Activated T-helper 2 cell treated with anti-CD3 and anti-CD28 coated beads, Interferon-gamma antibody, Interleukin-2, Interleukin-4, amounts not matched to agents 10 μg/mL and 5 μg/mL and 100 μg/mL, durations not matched to agents 14 hours and 24 hours and 36 hours (primary cell): ENCODE measurements at regions of chr9 and their contacts with region 1.

Region 1: DNA sequence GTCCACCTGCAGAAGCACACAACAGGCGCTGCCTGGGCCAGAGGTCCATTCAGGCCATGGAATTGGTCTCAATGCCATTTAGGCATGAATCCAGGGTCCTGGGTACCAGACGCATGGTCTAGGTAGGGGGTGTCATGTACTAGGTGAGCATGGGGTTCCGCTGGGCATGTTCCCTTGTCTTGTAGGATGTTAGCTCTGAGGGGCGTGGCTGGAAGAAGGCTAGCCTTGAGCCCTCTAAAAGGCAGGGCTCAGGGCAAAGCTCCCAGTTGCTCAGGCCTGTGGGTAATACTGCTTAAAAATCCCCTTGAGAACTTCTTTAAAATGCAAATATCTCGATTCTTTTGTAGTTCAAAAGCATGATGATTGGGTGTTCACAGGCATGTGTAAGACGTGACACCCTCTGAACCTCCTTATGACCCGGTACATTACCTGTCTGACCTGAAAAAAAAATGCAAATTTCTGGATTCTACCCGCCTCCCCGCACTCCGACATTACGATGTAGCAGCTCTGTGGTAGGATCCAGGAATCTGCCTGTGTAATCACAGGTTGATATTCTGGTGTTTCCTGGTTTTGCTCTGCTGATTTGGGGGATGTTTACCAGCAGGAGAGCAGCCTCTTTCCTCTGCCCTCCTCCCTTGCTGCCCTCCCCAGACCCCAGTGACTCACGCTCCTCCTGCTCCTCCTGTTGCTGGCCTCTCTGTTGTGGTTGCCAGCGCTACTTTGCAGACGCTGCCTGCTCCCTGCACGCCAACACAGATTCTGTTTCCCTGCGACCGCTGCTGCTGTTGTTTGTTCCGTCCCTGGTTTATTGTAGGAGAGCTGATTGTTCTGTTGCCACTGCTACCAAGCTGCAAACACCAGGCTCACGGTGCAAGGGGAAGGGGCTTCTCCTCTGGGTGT is 5.7 kb downstream of the TMC1 start:
- DNase-seq: peak; percentile 61
- H3K4me3 Mint-ChIP-seq: peak overlapping the region; percentile 72
- H3K27ac Mint-ChIP-seq: peak overlapping the region; percentile 94
- H3K4me1 Mint-ChIP-seq: peaks cover 43% of the 10 kb centered on the region
- H3K27me3 Mint-ChIP-seq: no peaks in the 10 kb centered on the region

Region 2: DNA sequence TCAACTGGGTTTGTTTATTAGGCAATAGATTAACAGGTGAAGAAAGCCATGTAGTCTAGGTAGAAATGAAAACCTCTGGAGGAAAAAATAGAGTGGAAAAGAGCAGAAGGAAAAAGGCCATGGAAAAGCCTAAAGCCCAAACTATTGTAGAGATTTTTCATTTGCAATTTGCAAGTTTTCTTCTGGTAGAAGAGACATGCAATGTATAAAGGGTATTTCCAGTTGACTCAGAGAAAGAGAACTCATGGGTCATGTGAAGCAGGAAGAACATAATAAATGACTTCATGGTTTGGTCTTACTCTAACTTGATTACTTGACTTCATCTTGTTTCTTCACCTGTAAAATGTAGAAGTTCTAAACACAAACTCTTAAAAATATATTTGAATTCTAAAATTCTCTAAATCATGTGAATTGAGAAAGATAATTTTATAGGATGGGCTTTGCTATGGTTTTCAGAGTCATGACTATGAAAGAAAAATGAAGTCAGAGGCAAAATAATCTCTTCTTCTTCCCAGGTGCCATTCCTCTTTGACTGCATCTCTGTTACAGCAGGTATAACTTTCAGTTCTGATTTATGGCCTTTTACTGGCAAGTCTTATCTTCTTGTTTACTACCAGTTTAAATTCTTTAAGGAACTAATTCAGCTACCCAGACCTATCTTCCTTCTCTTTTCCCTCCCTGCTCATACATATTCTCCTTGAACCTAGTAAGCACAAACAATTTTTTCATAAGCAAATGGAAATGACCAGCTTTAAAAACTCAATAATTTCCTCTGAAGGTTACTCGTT is 53.5 kb before region 1 on chr9:
- intact Hi-C with region 1: loop called (anchors 1 kb)
- DNase-seq: no peak
- H3K4me3 Mint-ChIP-seq: no peak overlapping the region
- H3K27ac Mint-ChIP-seq: peak overlapping the region; percentile 77
- H3K4me1 Mint-ChIP-seq: peaks cover 33% of the 10 kb centered on the region
- H3K27me3 Mint-ChIP-seq: no peaks in the 10 kb centered on the region

Region 3: DNA sequence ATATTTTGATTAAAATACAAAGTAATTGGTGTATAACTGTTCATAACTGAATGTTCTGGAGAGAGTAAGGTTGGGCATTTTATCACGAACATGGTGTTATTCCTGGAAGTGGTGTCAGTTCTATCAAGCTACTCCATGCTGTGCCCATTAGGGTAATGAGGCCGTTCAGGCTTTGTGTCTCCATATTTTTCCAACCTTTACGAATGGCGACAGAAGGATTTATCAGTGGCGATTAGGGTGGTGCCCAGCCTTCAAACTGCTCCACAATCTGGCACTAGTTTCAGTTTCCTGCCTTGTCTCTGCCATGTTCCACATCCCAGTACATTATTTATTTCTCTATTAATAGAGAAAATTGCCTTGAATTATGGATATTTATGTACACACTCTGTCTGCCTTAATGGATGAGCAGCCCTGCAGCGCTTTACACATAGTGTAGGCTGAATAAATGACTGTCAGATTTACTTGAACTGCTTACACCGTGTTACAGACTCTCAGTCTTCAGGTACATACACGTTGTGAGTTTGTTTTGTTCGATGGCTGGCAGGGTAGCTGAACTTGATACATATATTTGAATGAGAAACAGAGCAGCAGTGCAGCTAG is 29.6 kb before region 1 on chr9:
- intact Hi-C with region 1: no loop called
- DNase-seq: no peak
- H3K4me3 Mint-ChIP-seq: no peak overlapping the region
- H3K27ac Mint-ChIP-seq: no peak overlapping the region
- H3K4me1 Mint-ChIP-seq: peaks cover 1% of the 10 kb centered on the region
- H3K27me3 Mint-ChIP-seq: peaks cover 2% of the 10 kb centered on the region

Region 4: GRCh38 chr9:72541676-72542289 is 14.6 kb after region 1 on chr9:
- intact Hi-C with region 1: loop called (anchors 1 kb)
- DNase-seq: no peak
- H3K4me3 Mint-ChIP-seq: no peak overlapping the region
- H3K27ac Mint-ChIP-seq: peak overlapping the region; percentile 73
- H3K4me1 Mint-ChIP-seq: peaks cover 26% of the 10 kb centered on the region
- H3K27me3 Mint-ChIP-seq: no peaks in the 10 kb centered on the region